ENCODE measurements at regions of chr10 and their contacts with region 1.

Region 1: DNA sequence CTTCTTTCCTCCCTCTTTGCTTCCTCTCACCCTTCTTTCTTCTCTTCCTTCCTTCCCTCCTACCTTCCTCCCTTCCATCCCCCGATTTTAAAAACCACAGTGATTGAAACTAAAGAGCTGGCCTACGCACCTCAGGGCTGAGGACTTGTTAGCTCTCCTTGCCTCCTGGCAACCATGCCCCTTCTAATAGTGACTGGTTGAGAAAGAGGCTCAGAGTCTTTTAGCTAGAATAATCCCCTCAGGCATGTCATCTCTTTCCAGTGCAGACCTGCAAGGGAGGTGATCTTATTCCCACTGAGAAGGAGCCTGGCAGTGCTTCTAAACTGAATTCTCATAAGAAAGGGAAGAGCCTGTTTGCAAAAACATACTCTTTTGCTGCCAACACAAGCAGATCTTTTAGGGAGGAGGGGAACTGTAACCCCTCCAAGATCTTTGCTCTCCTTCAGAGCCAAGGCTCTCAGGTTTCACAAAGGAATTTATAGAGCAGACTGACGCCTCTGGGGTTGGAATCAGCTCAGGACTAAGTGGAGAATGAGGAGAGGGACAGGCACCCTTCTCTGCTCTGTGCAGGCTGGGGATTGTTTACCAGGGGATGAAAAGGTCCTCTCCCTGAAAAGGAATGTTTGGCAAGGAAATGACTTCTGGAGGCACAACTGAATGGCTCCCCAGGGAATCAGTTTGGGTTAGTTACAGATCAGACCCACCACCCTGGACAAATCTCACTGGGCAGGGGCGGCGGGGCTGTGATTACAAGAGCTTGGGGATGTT is 9.4 kb upstream of the ANKRD1 start:
- DNase-seq: peak; percentile 64 to 91
- H3K4me3 ChIP-seq: peak overlapping the region; percentile 23; the same call in 1 of the 2 replicates
- H3K27ac ChIP-seq: peak overlapping the region; percentile 93
- H3K4me1 ChIP-seq: peaks cover 48% of the 10 kb centered on the region
- H3K27me3 ChIP-seq: no peaks in the 10 kb centered on the region
- CTCF ChIP-seq: no peak

Region 2: GRCh38 chr10:90968328-90969086 is 38.3 kb after region 1 on chr10:
- CTCF ChIA-PET with region 1: no interaction called
- POLR2A ChIA-PET with region 1: interaction called, 13 read pairs
- intact Hi-C with region 1: loop called (anchors 1 kb)
- DNase-seq: peak; percentile 15 to 89
- H3K4me3 ChIP-seq: no peak overlapping the region; the same call in 1 of the 2 replicates
- H3K27ac ChIP-seq: peak overlapping the region; percentile 84
- H3K4me1 ChIP-seq: peaks cover 28% of the 10 kb centered on the region
- H3K27me3 ChIP-seq: no peaks in the 10 kb centered on the region
- CTCF ChIP-seq: no peak; the same call in 1 of the 2 replicates

Region 3: DNA sequence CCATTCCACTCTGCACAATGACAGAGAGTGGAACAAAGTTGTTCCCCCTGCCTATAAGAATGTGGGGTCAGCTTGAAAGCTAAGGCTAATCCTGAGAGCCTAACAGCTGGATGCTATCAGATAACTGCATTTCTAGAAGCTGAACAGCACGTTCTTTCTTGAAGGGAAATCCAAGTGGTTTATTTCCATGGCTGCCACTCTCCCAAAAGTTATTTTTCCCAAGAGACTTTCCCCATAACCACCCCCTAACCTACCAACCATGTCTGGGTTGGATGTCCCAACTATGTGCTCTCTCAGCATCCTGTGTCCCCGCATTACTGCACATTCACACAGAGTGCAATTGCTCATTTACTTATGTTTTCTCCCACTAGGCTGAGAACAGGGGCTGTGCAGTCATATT is 131.4 kb after region 1 on chr10:
- CTCF ChIA-PET with region 1: no interaction called
- POLR2A ChIA-PET with region 1: no interaction called
- intact Hi-C with region 1: no loop called
- DNase-seq: no peak
- H3K4me3 ChIP-seq: no peak overlapping the region
- H3K27ac ChIP-seq: no peak overlapping the region
- H3K4me1 ChIP-seq: no peaks in the 10 kb centered on the region
- H3K27me3 ChIP-seq: no peaks in the 10 kb centered on the region
- CTCF ChIP-seq: no peak

Region 4: GRCh38 chr10:91220194-91220953 is 290.1 kb after region 1 on chr10 and contains the start of gene PCGF5:
- CTCF ChIA-PET with region 1: no interaction called
- POLR2A ChIA-PET with region 1: interaction called, 12 read pairs
- intact Hi-C with region 1: no loop called
- DNase-seq: peak; percentile 55 to 90
- H3K4me3 ChIP-seq: peak within 1 kb of the TSS; percentile 69
- H3K27ac ChIP-seq: no peak within 1 kb of the TSS
- H3K4me1 ChIP-seq: peaks cover 13% of the 10 kb centered on the region
- H3K27me3 ChIP-seq: no peaks in the 10 kb centered on the region
- CTCF ChIP-seq: no peak
- total RNA-seq, gene PCGF5: 20.4 and 27.7 TPM in 2 replicates

Region 5: GRCh38 chr10:91613411-91614253 is 683.4 kb after region 1 on chr10:
- CTCF ChIA-PET with region 1: no interaction called
- POLR2A ChIA-PET with region 1: no interaction called
- intact Hi-C with region 1: loop called (anchors 10 kb)
- DNase-seq: peak; percentile 40 to 82
- H3K4me3 ChIP-seq: no peak overlapping the region
- H3K27ac ChIP-seq: peak overlapping the region; percentile 58
- H3K4me1 ChIP-seq: peaks cover 43% of the 10 kb centered on the region
- H3K27me3 ChIP-seq: no peaks in the 10 kb centered on the region
- CTCF ChIP-seq: no peak

Measured in PC-9 (cell line).